Tibial artery (tissue), 4 donors: ENCODE measurements at regions of chr1 and their contacts with region 1.

Region 1: DNA sequence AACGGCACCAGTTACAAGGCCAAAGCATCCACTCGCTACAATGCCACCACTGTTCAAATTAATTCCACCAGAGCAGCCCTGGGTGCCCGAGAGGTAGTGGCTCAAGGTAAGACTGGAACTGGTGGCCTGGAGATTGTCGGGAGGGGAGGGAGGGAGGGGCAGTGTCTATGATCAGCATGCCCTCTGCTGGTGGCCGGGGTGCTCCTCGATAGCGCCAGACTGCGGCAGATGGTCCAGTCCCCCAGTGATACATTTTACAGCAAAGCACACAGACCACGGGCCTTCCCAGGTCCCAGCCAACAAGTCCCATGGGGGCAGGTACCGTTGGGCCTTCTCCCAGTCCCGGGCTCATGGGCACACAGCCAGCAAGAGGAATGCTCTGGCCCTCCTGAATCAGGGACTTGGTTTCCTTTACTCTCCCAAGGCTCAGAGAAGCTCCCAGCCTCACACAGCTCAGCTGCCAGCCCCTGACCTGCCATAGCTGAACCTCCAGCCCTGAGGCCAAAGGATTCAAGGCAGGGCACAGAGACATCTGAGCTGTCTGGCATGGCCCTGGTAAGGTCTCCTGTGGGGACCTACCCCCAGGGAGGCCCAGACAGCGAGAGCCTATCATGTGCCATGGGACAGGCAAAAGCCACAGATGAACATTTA is 15.3 kb downstream of the ACOT7 start:
- DNase-seq: no peak
- H3K4me3 ChIP-seq: no peak overlapping the region
- H3K27ac ChIP-seq: no peak overlapping the region
- H3K4me1 ChIP-seq: no peaks in the 10 kb centered on the region
- H3K27me3 ChIP-seq: no peaks in the 10 kb centered on the region
- CTCF ChIP-seq: no peak

Region 2: GRCh38 chr1:6171548-6172119 is 206.6 kb before region 1 on chr1:
- intact Hi-C with region 1: no loop called
- DNase-seq: no peak
- H3K4me3 ChIP-seq: no peak overlapping the region
- H3K27ac ChIP-seq: no peak overlapping the region
- H3K4me1 ChIP-seq: no peaks in the 10 kb centered on the region
- H3K27me3 ChIP-seq: peaks cover 0 to 70% of the 10 kb centered on the region in 2 donors
- CTCF ChIP-seq: no peak

Region 3: GRCh38 chr1:6401673-6402072 is 23.5 kb after region 1 on chr1:
- intact Hi-C with region 1: no loop called
- DNase-seq: no peak
- H3K4me3 ChIP-seq: no peak overlapping the region
- H3K27ac ChIP-seq: no peak overlapping the region
- H3K4me1 ChIP-seq: no peaks in the 10 kb centered on the region
- H3K27me3 ChIP-seq: peaks cover 0 to 29% of the 10 kb centered on the region in 2 donors
- CTCF ChIP-seq: no peak

Region 4: DNA sequence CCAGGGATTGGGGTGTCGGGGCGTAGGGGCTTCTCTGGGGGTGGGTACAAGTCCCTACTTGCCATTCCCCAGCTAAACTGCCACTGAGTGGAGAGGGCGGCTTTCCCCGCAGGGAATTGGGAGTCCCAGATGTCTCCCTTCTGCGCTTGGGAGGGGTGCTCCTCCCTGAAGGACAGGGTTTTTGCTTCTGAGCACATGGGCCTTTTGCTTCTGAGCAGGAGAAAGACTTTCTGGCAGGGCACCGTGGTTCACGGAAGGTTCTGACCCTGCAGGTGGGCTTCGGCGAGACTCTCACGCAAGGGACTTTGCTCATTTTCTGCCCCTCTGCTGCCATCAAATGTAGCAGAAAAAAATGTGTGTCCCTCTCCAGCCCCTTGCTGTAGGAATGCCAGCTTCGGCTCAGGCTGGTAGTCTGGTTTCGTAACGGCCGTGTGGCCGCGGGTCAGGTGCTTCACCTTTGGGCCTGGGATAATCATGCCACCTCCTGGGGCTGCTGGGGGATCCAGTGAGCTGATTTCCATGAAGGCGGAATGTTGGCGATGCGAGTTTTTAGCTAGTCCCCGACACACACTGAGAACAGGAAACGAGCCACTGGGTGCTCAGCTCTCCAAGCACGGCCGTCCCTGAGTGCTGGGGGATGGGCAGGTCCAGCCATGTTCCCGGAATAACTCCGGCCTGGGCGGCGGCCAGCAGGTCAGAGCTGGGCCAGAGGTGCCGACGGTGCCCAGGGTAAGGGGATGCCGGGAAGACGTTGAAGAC is 771.0 kb after region 1 on chr1:
- intact Hi-C with region 1: loop called (anchors 5 kb)
- DNase-seq: peak in 1 of 2 donors; percentile 73
- H3K4me3 ChIP-seq: peak overlapping the region; percentile 21 to 27
- H3K27ac ChIP-seq: no peak overlapping the region
- H3K4me1 ChIP-seq: peaks cover 0 to 17% (median 7%) of the 10 kb centered on the region in 4 donors
- H3K27me3 ChIP-seq: no peaks in the 10 kb centered on the region
- CTCF ChIP-seq: no peak